Breast epithelium (tissue), 4 donors: ENCODE measurements at regions of chr12 and their contacts with region 1.

Region 1: DNA sequence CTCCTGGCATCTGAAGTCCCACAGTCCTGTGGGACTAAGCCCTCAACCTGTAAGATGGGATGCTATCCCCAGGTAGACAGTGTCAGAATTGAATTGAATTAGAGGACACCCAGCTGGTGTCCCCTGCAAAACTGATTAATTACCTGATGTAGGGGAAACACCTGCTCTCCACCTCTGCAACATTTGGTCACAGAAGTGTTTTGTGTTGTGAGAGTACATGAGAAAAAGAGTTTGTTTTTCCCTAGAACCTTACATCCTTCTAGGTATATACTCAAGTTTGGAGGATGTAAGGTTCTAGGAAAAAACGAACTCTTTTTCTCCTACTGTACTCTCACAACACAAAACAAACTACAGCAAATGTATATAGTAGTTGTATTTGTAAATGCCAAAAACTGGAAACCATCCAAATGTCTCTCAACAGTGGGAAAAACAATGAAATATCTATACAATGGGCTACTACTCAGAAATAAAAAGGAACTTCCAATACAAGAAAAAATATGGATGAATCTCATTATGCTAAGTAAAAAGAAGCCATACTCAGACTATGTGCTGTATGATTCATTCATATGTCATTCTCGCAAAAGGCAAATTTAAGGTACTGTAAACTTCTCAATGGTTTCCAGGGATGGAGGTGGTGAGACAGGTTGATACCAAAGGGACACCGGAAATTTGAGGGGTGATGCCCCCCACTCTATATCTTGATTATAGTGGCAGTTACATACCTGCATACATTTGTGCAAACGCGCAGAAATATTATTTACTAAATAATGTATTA is 160.7 kb downstream of the MED13L start:
- DNase-seq: no peak
- H3K4me3 ChIP-seq: no peak overlapping the region
- H3K27ac ChIP-seq: no peak overlapping the region
- H3K4me1 ChIP-seq: peaks cover 0 to 3% of the 10 kb centered on the region in 2 donors
- H3K27me3 ChIP-seq: no peaks in the 10 kb centered on the region
- CTCF ChIP-seq: no peak
- POLR2A ChIP-seq: no peak

Region 2: DNA sequence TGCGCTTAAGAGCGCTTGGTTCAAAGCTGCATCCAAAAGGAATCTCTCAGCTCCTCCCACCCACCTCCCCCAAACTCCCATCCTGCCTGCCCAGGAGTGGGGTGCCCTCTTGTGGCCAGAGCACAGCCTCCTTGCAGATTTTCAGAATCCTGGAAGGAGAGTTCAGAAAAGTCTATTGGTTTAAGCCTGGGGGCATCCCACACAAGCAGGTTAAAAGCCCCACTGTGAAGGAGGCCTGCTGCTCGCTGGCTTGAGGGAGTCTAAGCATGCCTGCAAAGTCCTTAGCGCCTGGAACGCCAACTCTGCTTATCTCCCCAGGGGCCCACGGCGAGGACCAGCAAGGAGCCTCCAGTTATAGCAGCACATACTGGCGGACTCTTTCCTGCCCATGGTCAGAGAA is 1554.9 kb after region 1 on chr12:
- intact Hi-C with region 1: loop called (anchors 10 kb)
- DNase-seq: no peak
- H3K4me3 ChIP-seq: no peak overlapping the region
- H3K27ac ChIP-seq: no peak overlapping the region
- H3K4me1 ChIP-seq: no peaks in the 10 kb centered on the region
- H3K27me3 ChIP-seq: no peaks in the 10 kb centered on the region
- CTCF ChIP-seq: peak in 1 of 3 donors; percentile 16
- POLR2A ChIP-seq: no peak